IMR-90 (cell line): ENCODE measurements at regions of chr9 and their contacts with region 1.

Region 1: DNA sequence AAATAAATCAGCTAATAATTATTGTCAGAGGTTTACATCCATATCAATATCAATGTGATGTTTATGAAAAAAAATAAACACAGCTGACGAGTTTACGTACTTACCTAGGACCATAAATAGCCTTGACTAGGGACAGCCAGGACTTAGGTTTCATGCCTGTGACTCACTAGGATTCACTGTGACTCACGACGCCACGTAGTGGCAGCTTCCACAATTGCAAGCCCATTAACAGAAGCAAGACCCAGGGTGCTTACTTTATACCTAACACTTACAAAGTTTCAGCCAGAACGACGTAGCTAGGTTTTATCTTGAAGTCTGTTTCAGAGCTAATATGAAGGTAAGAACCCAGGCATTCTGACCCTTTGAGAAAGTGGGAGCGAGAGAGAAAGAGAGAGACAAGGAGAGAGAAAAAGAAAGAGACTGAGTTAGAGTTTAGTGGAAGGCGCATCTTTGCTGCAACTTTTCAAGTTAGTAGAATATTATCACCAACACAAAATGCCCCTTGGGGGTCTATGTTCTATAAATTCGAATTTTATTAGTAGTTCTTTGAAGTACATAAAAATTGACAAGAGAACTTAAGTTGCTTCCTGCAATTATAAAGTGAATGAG is 191.2 kb downstream of the GNA14 start:
- DNase-seq: peak; percentile 91
- ATAC-seq: peak; percentile 94
- H3K4me3 ChIP-seq: no peak overlapping the region
- H3K27ac ChIP-seq: no peak overlapping the region
- H3K4me1 ChIP-seq: no peaks in the 10 kb centered on the region
- H3K27me3 ChIP-seq: no peaks in the 10 kb centered on the region
- CTCF ChIP-seq: peak; percentile 86
- POLR2A ChIP-seq: no peak
- RAD21 ChIP-seq: peak; percentile 54

Region 2: DNA sequence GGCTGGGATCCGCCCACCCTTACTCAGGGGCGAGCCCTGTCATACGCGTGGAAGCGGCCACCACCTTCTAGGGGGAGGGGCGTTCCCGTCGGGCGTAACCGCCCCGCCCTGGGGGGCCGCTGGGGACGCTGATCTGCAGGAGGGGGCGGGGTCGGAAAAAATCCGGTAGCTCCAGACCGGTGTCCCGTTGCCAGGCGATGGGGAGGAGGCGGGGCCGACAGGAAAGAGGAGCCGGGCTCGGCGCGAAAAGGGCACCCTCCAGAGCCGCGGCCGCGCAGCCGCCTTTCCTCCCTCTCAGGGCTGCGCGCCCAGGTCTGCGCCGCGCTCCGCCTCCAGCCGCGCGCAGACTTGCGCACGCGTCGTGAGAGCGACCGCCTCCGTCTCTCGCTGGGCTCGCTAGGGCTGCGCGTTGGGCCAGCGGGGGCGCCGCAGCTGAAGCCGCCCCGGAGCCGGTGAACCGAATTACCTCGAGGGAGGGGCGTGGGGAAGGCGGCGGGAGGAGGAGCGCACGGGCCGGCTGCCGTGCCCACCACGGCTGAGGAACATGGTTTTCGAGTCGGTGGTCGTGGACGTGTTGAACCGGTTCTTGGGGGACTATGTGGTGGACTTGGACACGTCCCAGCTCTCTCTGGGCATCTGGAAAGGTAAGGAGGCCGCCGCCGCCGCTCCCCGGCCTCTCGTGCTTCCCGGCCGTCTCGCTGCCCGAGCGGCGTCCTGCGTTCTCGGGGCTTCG is 279.6 kb before region 1 on chr9 and contains the start of gene VPS13A:
- CTCF ChIA-PET with region 1: no interaction called
- POLR2A ChIA-PET with region 1: no interaction called
- dilution Hi-C with region 1: no loop called
- in situ Hi-C with region 1: no loop called
- intact Hi-C with region 1: loop called (anchors 5 kb)
- DNase-seq: peak; percentile 91
- ATAC-seq: peak; percentile 92
- H3K4me3 ChIP-seq: peak within 1 kb of the TSS; percentile 80
- H3K27ac ChIP-seq: peak within 1 kb of the TSS; percentile 43
- H3K4me1 ChIP-seq: 0 out of 2 replicates have a peak, but pooled peaks cover 1% of the 10 kb centered on the region
- H3K27me3 ChIP-seq: no peaks in the 10 kb centered on the region
- CTCF ChIP-seq: peak; percentile 34
- POLR2A ChIP-seq: no peak
- RAD21 ChIP-seq: no peak
- total RNA-seq, gene VPS13A: 26.5 and 46.9 TPM in 2 replicates

Region 3: GRCh38 chr9:77440057-77440456 is 16.9 kb before region 1 on chr9:
- CTCF ChIA-PET with region 1: interaction called, 10 read pairs
- POLR2A ChIA-PET with region 1: no interaction called
- dilution Hi-C with region 1: no loop called
- in situ Hi-C with region 1: no loop called
- intact Hi-C with region 1: no loop called
- DNase-seq: peak; percentile 47
- ATAC-seq: peak; percentile 49
- H3K4me3 ChIP-seq: no peak overlapping the region
- H3K27ac ChIP-seq: no peak overlapping the region
- H3K4me1 ChIP-seq: no peaks in the 10 kb centered on the region; the same call in 1 of the 2 replicates
- H3K27me3 ChIP-seq: peaks cover 2% of the 10 kb centered on the region
- CTCF ChIP-seq: no peak
- POLR2A ChIP-seq: no peak
- RAD21 ChIP-seq: no peak

Region 4: GRCh38 chr9:78235756-78236538 is 779.0 kb after region 1 on chr9 and contains the start of gene CEP78:
- CTCF ChIA-PET with region 1: no interaction called
- POLR2A ChIA-PET with region 1: no interaction called
- dilution Hi-C with region 1: no loop called
- in situ Hi-C with region 1: no loop called
- intact Hi-C with region 1: loop called (anchors 10 kb)
- DNase-seq: peak; percentile 92
- ATAC-seq: peak; percentile 96
- H3K4me3 ChIP-seq: peak within 1 kb of the TSS; percentile 90
- H3K27ac ChIP-seq: peak within 1 kb of the TSS; percentile 71
- H3K4me1 ChIP-seq: peaks cover 5% of the 10 kb centered on the region; the same call in 1 of the 2 replicates
- H3K27me3 ChIP-seq: no peaks in the 10 kb centered on the region
- CTCF ChIP-seq: no peak
- POLR2A ChIP-seq: peak; percentile 51; the same call in 1 of the 2 replicates
- RAD21 ChIP-seq: no peak
- total RNA-seq, gene CEP78: 18.3 and 21.4 TPM in 2 replicates